ENCODE measurements at regions of chr5 and their contacts with region 1.

Region 1: DNA sequence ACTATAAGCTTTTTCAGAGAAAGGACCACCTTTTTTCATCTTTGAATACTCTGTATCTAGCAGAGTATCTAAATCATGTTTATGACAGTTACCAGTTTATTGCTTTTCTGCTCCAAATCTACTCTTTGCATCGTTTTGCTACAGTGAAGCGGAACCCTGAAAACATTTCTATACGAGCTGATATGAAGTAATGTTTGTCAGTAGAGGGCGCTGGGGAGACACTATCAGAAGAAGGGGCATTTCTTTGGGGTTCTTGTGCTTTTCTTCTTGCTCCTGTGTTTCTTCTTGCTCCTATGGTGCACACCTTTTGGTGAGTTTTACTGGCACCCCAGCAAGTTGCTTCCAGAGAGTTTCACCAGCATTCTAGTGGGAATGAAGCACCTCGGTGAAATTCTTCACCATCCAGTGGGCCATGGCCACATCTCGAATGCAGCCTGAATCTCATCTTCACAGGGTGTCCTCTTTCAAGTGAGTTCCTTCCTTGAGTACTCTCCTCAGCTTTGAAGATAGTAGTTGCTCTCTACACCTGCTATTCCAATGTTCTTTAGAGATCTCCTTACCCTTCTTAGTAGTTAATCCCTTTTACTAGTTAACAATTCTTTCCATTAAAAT is 98.4 kb downstream of the FGF1 start:
- DNase-seq: peak; percentile 62
- ATAC-seq: no peak
- H3K4me3 Mint-ChIP-seq: no peak overlapping the region
- H3K27ac Mint-ChIP-seq: no peak overlapping the region
- H3K4me1 Mint-ChIP-seq: peaks cover 2% of the 10 kb centered on the region
- H3K27me3 Mint-ChIP-seq: peaks cover 11% of the 10 kb centered on the region
- CTCF ChIP-seq: peak; percentile 71

Region 2: GRCh38 chr5:142597546-142598341 is 10.3 kb after region 1 on chr5:
- CTCF ChIA-PET with region 1: interaction called, 12 read pairs
- POLR2A ChIA-PET with region 1: no interaction called
- intact Hi-C with region 1: no loop called
- DNase-seq: peak; percentile 32
- ATAC-seq: peak; percentile 61
- H3K4me3 Mint-ChIP-seq: no peak overlapping the region
- H3K27ac Mint-ChIP-seq: no peak overlapping the region
- H3K4me1 Mint-ChIP-seq: peaks cover 3% of the 10 kb centered on the region
- H3K27me3 Mint-ChIP-seq: peaks cover 10% of the 10 kb centered on the region
- CTCF ChIP-seq: no peak

Measured in activated CD8-positive, alpha-beta T cell treated with anti-CD3 and anti-CD28 coated beads for 36 hours (primary cell).